ENCODE measurements at regions of chr5 and their contacts with region 1.

Region 1: DNA sequence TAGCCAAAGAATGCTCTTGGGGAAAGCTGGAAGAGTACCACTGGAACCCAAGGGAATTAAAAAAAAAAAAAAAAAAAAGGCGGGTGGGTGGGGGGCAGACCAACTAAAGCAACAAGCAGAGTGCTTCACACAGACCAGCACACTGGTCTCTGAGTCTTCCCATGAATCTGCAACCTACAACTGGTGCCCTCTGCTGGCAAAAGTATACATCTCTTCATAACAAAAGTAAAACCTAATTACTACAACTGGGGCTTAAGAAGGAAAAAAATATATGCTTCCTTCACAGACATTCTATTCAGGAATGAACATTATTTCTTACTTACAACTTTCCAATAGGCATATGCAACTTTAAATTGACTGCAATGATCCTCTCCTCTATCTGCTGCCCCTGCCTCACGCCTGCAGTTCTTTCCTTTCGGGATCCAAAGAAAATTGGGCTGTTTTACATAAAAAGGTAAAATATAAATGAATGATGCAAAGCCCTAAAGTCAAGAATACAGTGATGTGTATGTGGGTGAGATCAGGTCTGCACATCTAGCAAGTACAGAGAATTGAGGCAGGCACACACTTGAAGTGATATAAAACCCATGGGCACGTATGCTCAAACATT is 7.2 kb upstream of the KLHL3 start:
- DNase-seq: peak; percentile 68
- ATAC-seq: peak; percentile 89
- H3K4me3 Mint-ChIP-seq: no peak overlapping the region
- H3K27ac Mint-ChIP-seq: no peak overlapping the region
- H3K4me1 Mint-ChIP-seq: peaks cover 13% of the 10 kb centered on the region
- H3K27me3 Mint-ChIP-seq: no peaks in the 10 kb centered on the region
- CTCF ChIP-seq: peak; percentile 64

Region 2: DNA sequence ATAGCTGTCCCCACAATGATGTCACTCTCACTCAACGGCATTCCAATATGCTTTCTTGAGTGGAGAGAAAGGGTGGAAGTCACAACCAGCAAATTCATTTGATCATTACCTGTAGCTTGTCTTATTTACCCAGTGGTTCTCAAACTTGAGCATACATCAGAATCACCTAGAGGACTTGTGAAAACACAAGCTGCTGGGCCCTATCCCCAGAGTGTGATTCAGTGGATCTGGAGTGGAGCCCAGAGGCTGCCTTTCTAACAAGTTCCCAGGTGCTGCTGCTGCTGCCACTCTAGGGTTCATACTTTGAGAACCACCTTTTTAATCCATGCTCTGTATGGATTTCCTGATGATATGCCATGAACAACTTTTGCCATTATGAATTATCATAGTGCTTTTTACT is 102.0 kb before region 1 on chr5:
- CTCF ChIA-PET with region 1: interaction called, 13 read pairs
- POLR2A ChIA-PET with region 1: no interaction called
- intact Hi-C with region 1: no loop called
- DNase-seq: no peak
- ATAC-seq: no peak
- H3K4me3 Mint-ChIP-seq: no peak overlapping the region
- H3K27ac Mint-ChIP-seq: no peak overlapping the region
- H3K4me1 Mint-ChIP-seq: no peaks in the 10 kb centered on the region
- H3K27me3 Mint-ChIP-seq: no peaks in the 10 kb centered on the region
- CTCF ChIP-seq: no peak

Region 3: GRCh38 chr5:137665678-137666460 is 77.3 kb before region 1 on chr5:
- CTCF ChIA-PET with region 1: interaction called, 540 read pairs
- POLR2A ChIA-PET with region 1: interaction called, 4 read pairs
- intact Hi-C with region 1: no loop called
- DNase-seq: peak; percentile 71
- ATAC-seq: peak; percentile 99
- H3K4me3 Mint-ChIP-seq: no peak overlapping the region
- H3K27ac Mint-ChIP-seq: peak overlapping the region; percentile 76
- H3K4me1 Mint-ChIP-seq: peaks cover 26% of the 10 kb centered on the region
- H3K27me3 Mint-ChIP-seq: no peaks in the 10 kb centered on the region
- CTCF ChIP-seq: no peak

Region 4: DNA sequence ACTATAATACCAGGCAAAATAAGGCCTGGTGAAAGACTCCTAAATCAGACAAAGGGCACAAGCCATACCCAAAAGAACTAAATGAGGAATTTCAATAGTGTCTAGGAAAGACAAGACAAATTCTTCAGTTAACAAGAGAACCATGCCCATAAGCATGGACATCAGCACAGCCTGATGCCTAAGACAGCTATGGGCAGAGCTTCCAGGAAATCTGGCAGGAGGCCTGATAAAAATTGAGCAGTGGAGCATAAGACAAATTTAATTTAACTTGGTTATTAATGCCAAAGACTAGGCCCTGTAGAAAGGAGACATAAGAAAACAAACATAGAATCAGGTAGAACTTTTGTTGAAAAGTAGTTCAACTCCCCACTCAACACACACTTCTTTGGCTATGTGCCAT is 24.5 kb before region 1 on chr5:
- CTCF ChIA-PET with region 1: interaction called, 16 read pairs
- POLR2A ChIA-PET with region 1: no interaction called
- intact Hi-C with region 1: no loop called
- DNase-seq: no peak
- ATAC-seq: no peak
- H3K4me3 Mint-ChIP-seq: no peak overlapping the region
- H3K27ac Mint-ChIP-seq: no peak overlapping the region
- H3K4me1 Mint-ChIP-seq: peaks cover 5% of the 10 kb centered on the region
- H3K27me3 Mint-ChIP-seq: no peaks in the 10 kb centered on the region
- CTCF ChIP-seq: no peak

Region 5: DNA sequence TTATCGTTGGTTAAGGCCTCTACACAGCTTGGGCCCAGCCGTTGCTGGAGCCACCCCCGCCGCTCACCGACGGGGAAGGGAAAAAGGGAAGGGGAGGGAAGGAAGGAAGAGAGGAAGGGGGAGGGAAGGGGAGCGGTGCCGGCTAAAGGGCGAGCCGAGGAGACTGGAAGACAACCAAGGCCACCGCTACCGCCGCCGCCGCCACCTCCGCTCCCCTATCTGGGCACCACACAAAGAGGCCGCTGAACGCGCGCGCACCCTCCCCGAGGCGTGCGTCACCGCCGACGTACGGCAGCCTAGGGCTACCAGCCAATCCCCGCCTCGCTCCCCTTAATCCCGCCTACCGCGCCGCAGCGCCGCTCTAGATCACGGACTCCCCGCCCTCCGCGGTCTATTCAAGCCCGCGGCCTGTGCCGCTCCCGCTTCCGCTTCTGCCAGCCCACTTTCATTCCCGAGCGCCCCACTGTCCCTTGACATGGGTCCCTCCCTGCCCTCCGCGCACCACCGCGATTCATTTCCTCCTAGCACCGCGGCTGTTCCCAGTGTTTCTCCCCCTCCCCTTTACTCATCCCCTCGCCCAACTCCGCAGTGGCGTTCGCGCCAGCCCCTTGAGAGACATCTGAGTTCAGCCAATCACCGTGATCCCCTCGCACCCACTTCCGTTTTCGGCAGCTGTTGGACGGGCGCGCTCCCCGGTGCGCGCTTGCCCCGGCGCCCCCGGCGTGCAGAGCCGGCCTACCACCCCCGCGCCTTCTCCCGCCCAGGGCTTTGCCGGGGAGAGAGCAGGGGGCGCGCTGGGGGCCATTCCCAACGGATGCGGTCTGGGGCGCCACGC is 11.2 kb after region 1 on chr5 and contains the start of gene HNRNPA0:
- CTCF ChIA-PET with region 1: interaction called, 44 read pairs
- POLR2A ChIA-PET with region 1: interaction called, 43 read pairs
- intact Hi-C with region 1: no loop called
- DNase-seq: peak; percentile 97
- ATAC-seq: peak; percentile 88
- H3K4me3 Mint-ChIP-seq: peak within 1 kb of the TSS; percentile 88
- H3K27ac Mint-ChIP-seq: peak within 1 kb of the TSS; percentile 99
- H3K4me1 Mint-ChIP-seq: peaks cover 23% of the 10 kb centered on the region
- H3K27me3 Mint-ChIP-seq: no peaks in the 10 kb centered on the region
- CTCF ChIP-seq: no peak
- total RNA-seq, gene HNRNPA0: 32.8 to 33.1 TPM